Activated CD4-positive, alpha-beta T cell treated with anti-CD3 and anti-CD28 coated beads for 36 hours (primary cell): ENCODE measurements at regions of chr12 and their contacts with region 1.

Region 1: GRCh38 chr12:123580772-123581171 is 3.6 kb upstream of the TMED2 start:
- DNase-seq: no peak
- ATAC-seq: no peak
- H3K4me3 Mint-ChIP-seq: no peak overlapping the region
- H3K27ac Mint-ChIP-seq: no peak overlapping the region
- H3K4me1 Mint-ChIP-seq: peaks cover 18% of the 10 kb centered on the region
- H3K27me3 Mint-ChIP-seq: no peaks in the 10 kb centered on the region

Region 2: GRCh38 chr12:122974274-122974891 is 606.4 kb before region 1 on chr12:
- CTCF ChIA-PET with region 1: no interaction called
- POLR2A ChIA-PET with region 1: no interaction called
- intact Hi-C with region 1: loop called in 1 of 2 experiments (anchors 1 kb)
- DNase-seq: peak; percentile 99
- ATAC-seq: peak; percentile 86
- H3K4me3 Mint-ChIP-seq: peak overlapping the region; percentile 95
- H3K27ac Mint-ChIP-seq: peak overlapping the region; percentile 100
- H3K4me1 Mint-ChIP-seq: peaks cover 21% of the 10 kb centered on the region
- H3K27me3 Mint-ChIP-seq: no peaks in the 10 kb centered on the region

Region 3: GRCh38 chr12:123271001-123271729 is 309.6 kb before region 1 on chr12:
- CTCF ChIA-PET with region 1: interaction called, 4 read pairs
- POLR2A ChIA-PET with region 1: no interaction called
- intact Hi-C with region 1: loop called in 1 of 2 experiments (anchors 1 kb)
- DNase-seq: peak; percentile 90
- ATAC-seq: peak; percentile 75
- H3K4me3 Mint-ChIP-seq: peak overlapping the region; percentile 86
- H3K27ac Mint-ChIP-seq: no peak overlapping the region
- H3K4me1 Mint-ChIP-seq: peaks cover 23% of the 10 kb centered on the region
- H3K27me3 Mint-ChIP-seq: no peaks in the 10 kb centered on the region

Region 4: DNA sequence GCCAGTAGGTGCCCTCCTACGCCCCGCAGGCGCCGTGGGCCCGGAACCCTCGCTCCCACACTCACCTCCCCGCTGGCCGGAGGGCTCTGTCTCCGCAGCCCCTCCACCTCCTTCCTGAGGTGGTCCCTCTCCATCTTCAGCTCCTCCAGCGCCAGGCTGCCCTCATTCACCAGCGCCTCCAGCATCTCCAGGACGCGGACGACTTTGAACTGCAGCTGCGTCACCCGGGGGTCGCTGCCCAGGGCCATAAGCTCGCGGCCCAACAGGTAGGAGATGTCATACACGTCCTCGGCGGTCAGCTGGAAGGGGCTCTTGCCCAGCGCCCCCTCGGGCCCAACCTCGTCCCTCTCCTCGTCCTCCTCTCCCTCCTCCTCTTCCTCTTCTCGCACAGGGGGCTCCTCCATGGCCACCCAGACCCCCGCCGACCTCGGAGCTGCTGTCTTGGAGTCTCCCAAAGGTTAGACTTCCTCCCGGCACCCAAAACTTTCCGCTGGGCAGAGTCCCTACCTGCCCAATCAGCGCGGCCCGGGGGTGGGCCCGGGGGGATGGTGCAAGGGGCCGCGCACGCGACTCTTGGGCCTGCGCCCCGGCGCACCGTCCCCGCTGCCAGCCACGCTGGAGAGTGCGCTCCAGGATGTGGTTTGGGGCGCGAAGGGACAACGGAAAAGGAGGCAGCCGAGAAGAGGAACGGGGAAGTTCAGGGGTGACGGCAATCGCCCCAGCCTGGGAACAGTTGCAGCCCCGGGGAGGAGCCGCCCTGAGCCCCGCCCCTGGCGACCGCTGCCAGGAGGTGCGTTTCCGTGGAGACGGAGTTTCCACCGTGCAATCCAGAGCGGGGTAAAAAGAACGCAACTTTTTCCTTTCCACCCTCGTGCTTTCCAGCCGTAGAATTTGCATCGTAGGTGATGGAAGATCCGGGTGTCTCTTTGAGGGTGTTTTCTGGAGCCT is 144.5 kb before region 1 on chr12 and contains the start of gene RILPL2:
- CTCF ChIA-PET with region 1: interaction called, 6 read pairs
- POLR2A ChIA-PET with region 1: no interaction called
- intact Hi-C with region 1: loop called in 1 of 2 experiments (anchors 1 kb)
- DNase-seq: peak; percentile 96
- ATAC-seq: peak; percentile 85
- H3K4me3 Mint-ChIP-seq: peak within 1 kb of the TSS; percentile 95
- H3K27ac Mint-ChIP-seq: peak within 1 kb of the TSS; percentile 98
- H3K4me1 Mint-ChIP-seq: peaks cover 33% of the 10 kb centered on the region
- H3K27me3 Mint-ChIP-seq: no peaks in the 10 kb centered on the region
- total RNA-seq, gene RILPL2: 10.4 to 12.1 TPM

Region 5: DNA sequence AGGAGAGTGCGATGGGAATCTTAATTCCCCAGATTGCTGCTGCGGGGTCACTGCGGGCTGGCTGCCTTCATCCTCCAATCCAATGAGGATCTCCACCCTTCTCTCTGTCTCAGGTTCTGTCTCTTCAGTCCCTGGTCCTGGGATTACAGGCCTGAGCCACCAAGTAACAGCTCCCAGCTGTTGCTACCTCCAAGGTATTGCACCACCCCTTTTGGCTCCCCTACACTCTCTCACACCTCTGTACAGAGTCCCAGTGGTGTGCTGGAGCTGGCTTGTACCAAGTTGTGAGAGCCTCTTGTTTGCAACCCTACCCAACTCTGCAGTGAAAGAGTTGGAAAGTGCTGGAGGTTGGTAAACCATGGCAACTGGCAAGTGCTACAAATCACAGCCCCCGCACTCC is 37.2 kb before region 1 on chr12:
- CTCF ChIA-PET with region 1: interaction called, 11 read pairs
- POLR2A ChIA-PET with region 1: no interaction called
- intact Hi-C with region 1: no loop called
- DNase-seq: no peak
- ATAC-seq: no peak
- H3K4me3 Mint-ChIP-seq: no peak overlapping the region
- H3K27ac Mint-ChIP-seq: no peak overlapping the region
- H3K4me1 Mint-ChIP-seq: no peaks in the 10 kb centered on the region
- H3K27me3 Mint-ChIP-seq: no peaks in the 10 kb centered on the region

Region 6: GRCh38 chr12:123670882-123671728 is 90.3 kb after region 1 on chr12 and contains the start of gene TCTN2:
- CTCF ChIA-PET with region 1: interaction called, 3 read pairs
- POLR2A ChIA-PET with region 1: no interaction called
- intact Hi-C with region 1: loop called in 1 of 2 experiments (anchors 1 kb)
- DNase-seq: peak; percentile 98
- ATAC-seq: peak; percentile 100
- H3K4me3 Mint-ChIP-seq: peak within 1 kb of the TSS; percentile 78
- H3K27ac Mint-ChIP-seq: peak within 1 kb of the TSS; percentile 25
- H3K4me1 Mint-ChIP-seq: peaks cover 15% of the 10 kb centered on the region
- H3K27me3 Mint-ChIP-seq: no peaks in the 10 kb centered on the region
- total RNA-seq, gene TCTN2: 4.4 to 4.5 TPM